Calu3 (cell line): ENCODE measurements at regions of chrX and their contacts with region 1.

Region 1: GRCh38 chrX:20221902-20222301 is 44.8 kb downstream of the RPS6KA3 start:
- DNase-seq: no peak
- H3K4me3 Mint-ChIP-seq: no peak overlapping the region
- H3K27ac Mint-ChIP-seq: no peak overlapping the region
- H3K4me1 Mint-ChIP-seq: peaks cover 33% of the 10 kb centered on the region
- H3K27me3 Mint-ChIP-seq: no peaks in the 10 kb centered on the region
- CTCF ChIP-seq: no peak

Region 2: GRCh38 chrX:20260885-20261284 is 39.0 kb after region 1 on chrX:
- CTCF ChIA-PET with region 1: no interaction called
- intact Hi-C with region 1: loop called (anchors 1 kb)
- DNase-seq: no peak
- H3K4me3 Mint-ChIP-seq: no peak overlapping the region
- H3K27ac Mint-ChIP-seq: no peak overlapping the region
- H3K4me1 Mint-ChIP-seq: peaks cover 19% of the 10 kb centered on the region
- H3K27me3 Mint-ChIP-seq: no peaks in the 10 kb centered on the region
- CTCF ChIP-seq: no peak

Region 3: GRCh38 chrX:20315140-20315539 is 93.2 kb after region 1 on chrX:
- CTCF ChIA-PET with region 1: no interaction called
- intact Hi-C with region 1: no loop called
- DNase-seq: peak; percentile 8
- H3K4me3 Mint-ChIP-seq: no peak overlapping the region
- H3K27ac Mint-ChIP-seq: no peak overlapping the region
- H3K4me1 Mint-ChIP-seq: peaks cover 10% of the 10 kb centered on the region
- H3K27me3 Mint-ChIP-seq: no peaks in the 10 kb centered on the region
- CTCF ChIP-seq: no peak

Region 4: DNA sequence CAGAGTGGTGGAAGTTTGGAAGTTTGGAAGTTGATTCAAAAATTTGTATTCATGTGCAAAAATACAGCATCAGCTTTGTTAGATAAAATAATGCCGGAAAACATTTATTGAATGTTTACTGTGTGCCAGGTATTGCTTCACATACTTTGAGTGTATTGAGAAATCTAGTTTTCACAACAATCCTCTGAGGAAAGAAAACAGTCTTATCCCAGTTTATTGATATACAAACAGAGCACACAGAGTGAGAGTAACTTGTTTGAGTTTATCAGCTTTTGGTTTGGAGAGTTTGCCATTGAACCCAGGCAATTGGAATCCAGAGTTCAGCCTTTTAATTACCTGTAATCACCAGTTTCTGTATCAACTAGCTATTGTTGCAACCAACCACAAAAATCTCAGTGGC is 172.0 kb after region 1 on chrX:
- CTCF ChIA-PET with region 1: no interaction called
- intact Hi-C with region 1: no loop called
- DNase-seq: no peak
- H3K4me3 Mint-ChIP-seq: no peak overlapping the region
- H3K27ac Mint-ChIP-seq: no peak overlapping the region
- H3K4me1 Mint-ChIP-seq: peaks cover 9% of the 10 kb centered on the region
- H3K27me3 Mint-ChIP-seq: no peaks in the 10 kb centered on the region
- CTCF ChIP-seq: no peak